ENCODE measurements at regions of chrX and their contacts with region 1.

Region 1: GRCh38 chrX:154762523-154763289 is at the start of gene DKC1:
- DNase-seq: peak; percentile 94
- H3K4me3 Mint-ChIP-seq: peak within 1 kb of the TSS; percentile 88
- H3K27ac Mint-ChIP-seq: peak within 1 kb of the TSS; percentile 91
- H3K4me1 Mint-ChIP-seq: peaks cover 19% of the 10 kb centered on the region
- H3K27me3 Mint-ChIP-seq: no peaks in the 10 kb centered on the region
- total RNA-seq, gene DKC1: 150 TPM in 2 replicates

Region 2: DNA sequence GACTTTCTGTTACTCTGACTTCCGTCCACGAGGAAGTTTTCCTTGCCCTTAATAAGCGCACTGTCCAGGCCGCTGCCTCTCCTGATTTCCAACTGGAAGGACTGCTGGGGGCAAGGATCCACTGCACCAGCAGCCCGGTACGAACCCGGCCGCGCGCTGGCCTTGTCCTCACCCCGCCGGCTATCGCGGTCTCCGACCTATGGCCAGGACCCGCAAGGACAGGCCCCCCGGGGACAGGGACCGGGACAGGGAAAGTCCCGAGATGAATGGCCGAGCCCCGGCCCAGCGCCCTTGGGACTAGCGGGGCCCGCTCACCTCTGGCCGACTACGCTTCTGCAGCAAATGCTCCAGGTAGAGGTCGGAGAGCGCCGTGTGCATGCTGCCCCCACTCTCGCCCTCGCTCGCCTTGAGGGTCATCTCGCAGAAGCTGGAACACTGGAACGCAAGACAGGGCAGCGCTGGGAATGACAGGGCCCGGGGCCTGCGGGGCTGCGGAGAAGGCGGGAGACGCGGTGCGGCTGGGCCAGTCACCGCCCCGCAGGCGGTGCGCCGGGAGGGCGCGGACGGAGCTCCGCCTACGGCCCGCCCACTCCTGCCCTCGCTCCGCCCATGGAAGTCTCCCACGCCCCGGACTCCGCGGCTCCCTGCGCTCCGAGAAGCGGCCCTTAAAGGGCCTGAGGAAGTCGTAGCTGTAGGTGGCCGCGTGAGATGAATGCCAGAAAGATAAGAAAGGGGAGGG is 42.4 kb after region 1 on chrX and contains the start of gene MPP1:
- intact Hi-C with region 1: loop called (anchors 2 kb)
- DNase-seq: peak; percentile 75
- H3K4me3 Mint-ChIP-seq: peak within 1 kb of the TSS; percentile 82
- H3K27ac Mint-ChIP-seq: peak within 1 kb of the TSS; percentile 72
- H3K4me1 Mint-ChIP-seq: peaks cover 36% of the 10 kb centered on the region
- H3K27me3 Mint-ChIP-seq: no peaks in the 10 kb centered on the region
- total RNA-seq, gene MPP1: 27.7 and 31.5 TPM in 2 replicates

Region 3: DNA sequence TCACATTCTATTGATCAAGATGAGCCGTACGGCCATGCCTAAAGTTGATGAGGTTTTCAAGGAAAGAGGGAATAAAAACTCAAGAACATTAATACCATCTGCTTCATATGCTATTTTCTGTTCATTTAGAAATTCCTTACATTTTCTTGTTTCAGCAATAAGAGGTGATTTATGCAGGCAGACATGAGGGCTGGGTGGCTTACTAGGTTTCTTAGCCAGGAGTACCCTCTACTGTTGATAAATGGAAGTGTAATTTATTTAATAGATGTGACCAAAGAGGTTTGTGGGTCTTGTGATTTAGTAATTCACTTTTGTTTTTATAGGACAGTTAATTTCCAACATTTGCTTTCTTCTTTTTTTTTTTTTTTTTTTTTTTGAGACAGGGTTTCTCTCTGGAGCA is 78.2 kb after region 1 on chrX:
- intact Hi-C with region 1: loop called (anchors 5 kb)
- DNase-seq: no peak
- H3K4me3 Mint-ChIP-seq: no peak overlapping the region
- H3K27ac Mint-ChIP-seq: no peak overlapping the region
- H3K4me1 Mint-ChIP-seq: peaks cover 7% of the 10 kb centered on the region
- H3K27me3 Mint-ChIP-seq: peaks cover 4% of the 10 kb centered on the region

Region 4: GRCh38 chrX:154855256-154855655 is 92.5 kb after region 1 on chrX:
- intact Hi-C with region 1: no loop called
- DNase-seq: no peak
- H3K4me3 Mint-ChIP-seq: no peak overlapping the region
- H3K27ac Mint-ChIP-seq: no peak overlapping the region
- H3K4me1 Mint-ChIP-seq: no peaks in the 10 kb centered on the region
- H3K27me3 Mint-ChIP-seq: no peaks in the 10 kb centered on the region

Measured in activated T-helper 2 cell treated with anti-CD3 and anti-CD28 coated beads, Interferon-gamma antibody, Interleukin-2, Interleukin-4, amounts not matched to agents 10 μg/mL and 5 μg/mL and 100 μg/mL, durations not matched to agents 14 hours and 24 hours and 36 hours (primary cell).